ENCODE measurements at regions of chr6 and their contacts with region 1.

Region 1: GRCh38 chr6:109308018-109308492 is 74.2 kb downstream of the CD164 start:
- DNase-seq: peak in 1 of 2 donors; percentile 51
- ATAC-seq: peak; percentile 49 to 96 (median 85)
- H3K4me3 ChIP-seq: no peak overlapping the region
- H3K27ac ChIP-seq: peak overlapping the region in 3 of 10 donors; percentile 28 to 45 (median 44)
- H3K4me1 ChIP-seq: peaks cover 0 to 21% (median 13%) of the 10 kb centered on the region in 9 donors
- H3K27me3 ChIP-seq: no peaks in the 10 kb centered on the region
- CTCF ChIP-seq: no peak

Region 2: DNA sequence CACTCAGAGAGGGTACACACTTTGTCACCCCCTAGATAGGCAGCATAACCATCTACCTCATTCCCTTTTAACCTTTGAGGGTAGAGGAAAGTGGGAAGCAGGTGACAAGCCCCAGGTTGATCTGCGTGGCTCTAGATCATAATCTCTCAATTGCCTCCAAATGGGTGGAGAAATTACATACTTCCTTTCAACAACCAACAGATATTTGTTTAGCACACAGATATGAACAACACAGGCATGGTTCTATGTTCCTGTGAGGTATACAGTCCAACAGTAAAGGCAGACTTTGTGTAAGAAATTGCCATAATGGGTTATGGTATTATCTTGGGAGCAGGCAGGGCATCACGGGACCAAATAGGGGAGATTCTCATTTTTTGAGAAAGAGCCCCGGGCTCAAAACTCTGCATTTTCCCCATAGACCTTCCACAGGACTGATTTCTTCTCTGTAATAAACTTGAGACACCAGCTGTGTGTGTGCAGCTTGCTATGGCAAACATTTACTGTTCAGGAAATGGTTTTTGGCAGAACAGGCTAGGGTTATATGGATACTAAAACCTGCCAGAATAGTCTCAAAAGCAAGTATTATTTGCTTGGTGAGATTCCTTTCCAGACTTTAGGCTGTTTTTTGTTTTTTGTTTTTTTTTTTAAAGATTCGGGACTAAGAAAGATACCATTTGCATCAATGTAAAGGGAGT is 52.0 kb before region 1 on chr6:
- intact Hi-C with region 1: no loop called
- DNase-seq: no peak
- ATAC-seq: no peak
- H3K4me3 ChIP-seq: no peak overlapping the region
- H3K27ac ChIP-seq: no peak overlapping the region
- H3K4me1 ChIP-seq: peaks cover 0 to 12% (median 0%) of the 10 kb centered on the region in 9 donors
- H3K27me3 ChIP-seq: no peaks in the 10 kb centered on the region
- CTCF ChIP-seq: no peak

Region 3: DNA sequence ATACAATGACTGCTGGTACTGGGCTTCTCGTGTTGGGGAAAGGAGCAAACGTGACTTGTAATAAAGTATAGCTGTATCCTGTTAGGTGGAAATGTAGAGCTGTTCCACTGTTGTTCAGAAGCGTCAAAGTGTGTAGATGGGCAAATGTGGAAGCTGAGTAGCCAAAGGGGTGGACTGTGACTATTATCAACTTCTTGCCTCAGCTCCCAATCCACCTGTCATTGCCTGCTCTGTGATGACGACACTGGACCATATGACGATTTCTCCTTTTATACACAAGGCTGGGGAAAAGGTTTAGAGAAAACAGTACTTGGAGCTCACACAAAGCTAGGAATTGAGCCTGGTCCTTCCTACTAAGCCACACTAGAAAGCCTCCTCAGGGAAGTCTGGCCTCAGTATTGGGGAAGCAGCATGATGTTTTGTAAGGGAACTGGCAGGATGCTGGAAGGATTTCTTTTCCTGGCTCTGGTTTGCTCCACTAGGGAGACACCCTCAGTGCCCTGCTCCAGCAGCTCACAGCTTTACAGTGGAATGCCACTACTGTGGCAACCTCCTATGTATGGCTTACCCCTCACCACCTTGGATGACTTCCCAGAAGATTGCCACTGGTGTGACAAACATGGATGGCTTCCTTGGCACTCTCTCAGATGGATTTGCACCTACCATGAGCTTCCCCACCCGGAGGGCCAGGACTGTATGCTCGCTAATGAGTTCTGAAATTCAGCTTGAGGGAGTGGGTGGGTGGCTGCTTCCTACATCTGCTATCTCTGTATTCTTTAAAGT is 54.2 kb after region 1 on chr6:
- intact Hi-C with region 1: loop called in 1 of 10 experiments (anchors 5 kb)
- DNase-seq: no peak
- ATAC-seq: peak in 2 of 8 donors; percentile 33 to 51
- H3K4me3 ChIP-seq: no peak overlapping the region
- H3K27ac ChIP-seq: no peak overlapping the region
- H3K4me1 ChIP-seq: peaks cover 0 to 20% (median 13%) of the 10 kb centered on the region in 9 donors
- H3K27me3 ChIP-seq: no peaks in the 10 kb centered on the region
- CTCF ChIP-seq: no peak